ENCODE measurements at regions of chr20 and their contacts with region 1.

Region 1: DNA sequence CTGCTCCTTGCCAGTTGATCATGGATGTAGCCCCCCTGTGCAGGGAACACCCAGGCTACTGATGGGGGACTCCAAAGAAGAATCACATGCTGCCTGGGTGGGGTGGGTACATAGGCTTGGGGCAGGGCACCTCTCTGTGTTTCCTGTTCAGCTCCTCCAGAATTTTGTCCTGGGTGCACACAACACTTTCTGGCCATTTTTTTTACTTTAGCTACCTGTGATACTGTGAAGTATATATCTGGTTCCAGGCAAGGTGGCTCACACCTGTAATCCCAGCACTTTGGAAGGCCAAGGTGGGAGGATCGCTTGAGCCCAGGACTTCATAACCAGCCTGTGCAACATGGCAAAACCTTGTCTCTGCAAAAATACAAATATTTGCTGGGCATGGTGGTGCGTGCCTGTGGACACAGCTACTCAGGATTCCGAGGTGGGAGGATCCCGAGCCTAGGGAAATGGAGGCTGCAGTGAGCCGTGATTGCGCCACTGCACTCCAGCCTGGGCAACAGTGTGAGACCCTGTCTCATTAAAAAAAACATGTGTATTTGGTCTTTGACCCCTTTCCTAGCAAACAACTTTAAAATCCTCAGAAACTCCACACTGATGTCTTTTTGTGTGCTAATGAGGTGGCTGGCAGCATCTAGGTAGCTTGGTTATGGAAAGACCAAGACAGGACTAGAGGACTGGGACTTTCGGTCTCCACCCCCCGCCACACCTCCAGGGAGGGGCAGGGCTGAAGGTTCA is 14.1 kb downstream of the SLC4A11 start:
- DNase-seq: no peak
- ATAC-seq: peak; percentile 55
- H3K4me3 ChIP-seq: no peak overlapping the region
- H3K27ac ChIP-seq: peak overlapping the region; percentile 84
- H3K4me1 ChIP-seq: peaks cover 56% of the 10 kb centered on the region
- H3K27me3 ChIP-seq: no peaks in the 10 kb centered on the region
- CTCF ChIP-seq: no peak

Region 2: DNA sequence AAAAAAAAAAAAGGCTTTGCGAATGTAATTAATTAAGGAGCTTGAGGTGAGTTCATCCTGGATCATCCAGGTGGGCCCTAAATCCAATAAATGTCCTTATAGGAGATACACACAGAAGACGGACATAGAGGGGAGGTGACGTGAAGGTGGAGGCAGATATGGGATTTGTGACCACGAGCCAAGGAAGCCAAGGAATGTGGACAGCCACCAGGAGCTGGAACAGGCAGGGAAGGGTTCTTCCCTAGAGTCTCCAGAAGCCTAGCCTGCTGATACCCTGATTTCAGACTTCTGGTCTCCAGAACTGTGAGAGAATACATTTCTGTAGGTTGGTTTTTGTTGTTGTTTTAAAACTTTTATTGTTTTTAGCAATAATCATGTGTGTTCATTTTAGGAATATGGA is 239.3 kb after region 1 on chr20:
- CTCF ChIA-PET with region 1: no interaction called
- POLR2A ChIA-PET with region 1: interaction called, 11 read pairs
- in situ Hi-C with region 1: no loop called
- intact Hi-C with region 1: no loop called
- DNase-seq: no peak
- ATAC-seq: no peak
- H3K4me3 ChIP-seq: no peak overlapping the region
- H3K27ac ChIP-seq: no peak overlapping the region
- H3K4me1 ChIP-seq: no peaks in the 10 kb centered on the region
- H3K27me3 ChIP-seq: no peaks in the 10 kb centered on the region; the same call in 1 of the 2 replicates
- CTCF ChIP-seq: no peak

Measured in Panc1 (cell line).